Esophagus muscularis mucosa (tissue), 4 donors: ENCODE measurements at regions of chr11 and their contacts with region 1.

Region 1: DNA sequence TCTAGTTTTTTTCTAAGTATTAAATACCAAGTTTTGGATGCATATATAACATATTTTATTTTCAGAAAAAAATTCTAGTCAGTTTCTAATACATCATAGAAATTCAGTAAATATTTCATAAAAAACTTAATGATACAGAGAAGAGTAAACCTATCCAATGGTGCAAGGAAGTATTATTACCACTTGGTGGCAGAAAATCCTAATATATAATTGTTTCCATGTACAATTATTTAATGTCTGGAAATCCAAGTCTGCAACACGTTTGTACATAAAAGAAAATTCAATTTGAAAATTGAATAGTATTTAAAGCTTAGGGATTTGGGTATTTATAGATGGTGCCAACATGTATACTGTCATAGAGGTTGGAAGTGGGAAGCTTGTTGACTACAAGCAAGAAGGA is 127.0 kb downstream of the TRPC6 start:
- DNase-seq: no peak
- H3K4me3 ChIP-seq: no peak overlapping the region
- H3K27ac ChIP-seq: no peak overlapping the region
- H3K4me1 ChIP-seq: peaks cover 0 to 8% (median 2%) of the 10 kb centered on the region in 4 donors
- H3K27me3 ChIP-seq: no peaks in the 10 kb centered on the region
- CTCF ChIP-seq: peak; percentile 28 to 63 (median 43)
- EP300 ChIP-seq: no peak
- POLR2A ChIP-seq: no peak

Region 2: DNA sequence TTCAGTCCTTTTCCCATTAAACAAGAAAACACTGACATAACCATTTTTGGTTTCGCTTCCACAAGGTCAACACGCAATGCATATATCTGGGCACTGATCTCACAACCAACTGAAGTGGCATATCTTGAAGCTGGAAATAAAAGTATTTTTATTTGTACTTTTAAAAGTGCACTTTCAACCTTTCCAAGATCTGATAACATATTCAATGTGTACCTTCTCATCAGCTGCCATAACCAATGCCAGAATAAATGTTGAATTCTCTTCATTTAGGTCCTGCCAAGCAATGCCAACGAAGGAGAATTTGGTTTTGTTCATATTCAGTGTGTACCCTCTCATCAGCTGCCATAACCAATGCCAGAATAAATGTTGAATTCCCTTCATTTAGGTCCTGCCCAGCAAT is 309.1 kb after region 1 on chr11:
- intact Hi-C with region 1: no loop called
- DNase-seq: no peak
- H3K4me3 ChIP-seq: no peak overlapping the region
- H3K27ac ChIP-seq: no peak overlapping the region
- H3K4me1 ChIP-seq: no peaks in the 10 kb centered on the region
- H3K27me3 ChIP-seq: no peaks in the 10 kb centered on the region
- CTCF ChIP-seq: no peak
- EP300 ChIP-seq: no peak
- POLR2A ChIP-seq: no peak

Region 3: GRCh38 chr11:101848262-101848661 is 391.4 kb after region 1 on chr11:
- intact Hi-C with region 1: loop called (anchors 5 kb)
- DNase-seq: no peak
- H3K4me3 ChIP-seq: no peak overlapping the region
- H3K27ac ChIP-seq: no peak overlapping the region
- H3K4me1 ChIP-seq: no peaks in the 10 kb centered on the region
- H3K27me3 ChIP-seq: no peaks in the 10 kb centered on the region
- CTCF ChIP-seq: peak; percentile 17 to 53 (median 48)
- EP300 ChIP-seq: no peak
- POLR2A ChIP-seq: no peak